Mammary epithelial cell (primary cell): ENCODE measurements at regions of chr12 and their contacts with region 1.

Region 1: GRCh38 chr12:89384050-89384758 is 31.9 kb upstream of the DUSP6 start:
- DNase-seq: peak; percentile 84
- H3K4me3 ChIP-seq: peak overlapping the region in 1 of 3 experiments; percentile 23
- H3K27ac ChIP-seq: peak overlapping the region; percentile 88
- H3K4me1 ChIP-seq: peaks cover 34% of the 10 kb centered on the region
- H3K27me3 ChIP-seq: no peaks in the 10 kb centered on the region
- CTCF ChIP-seq: no peak

Region 2: DNA sequence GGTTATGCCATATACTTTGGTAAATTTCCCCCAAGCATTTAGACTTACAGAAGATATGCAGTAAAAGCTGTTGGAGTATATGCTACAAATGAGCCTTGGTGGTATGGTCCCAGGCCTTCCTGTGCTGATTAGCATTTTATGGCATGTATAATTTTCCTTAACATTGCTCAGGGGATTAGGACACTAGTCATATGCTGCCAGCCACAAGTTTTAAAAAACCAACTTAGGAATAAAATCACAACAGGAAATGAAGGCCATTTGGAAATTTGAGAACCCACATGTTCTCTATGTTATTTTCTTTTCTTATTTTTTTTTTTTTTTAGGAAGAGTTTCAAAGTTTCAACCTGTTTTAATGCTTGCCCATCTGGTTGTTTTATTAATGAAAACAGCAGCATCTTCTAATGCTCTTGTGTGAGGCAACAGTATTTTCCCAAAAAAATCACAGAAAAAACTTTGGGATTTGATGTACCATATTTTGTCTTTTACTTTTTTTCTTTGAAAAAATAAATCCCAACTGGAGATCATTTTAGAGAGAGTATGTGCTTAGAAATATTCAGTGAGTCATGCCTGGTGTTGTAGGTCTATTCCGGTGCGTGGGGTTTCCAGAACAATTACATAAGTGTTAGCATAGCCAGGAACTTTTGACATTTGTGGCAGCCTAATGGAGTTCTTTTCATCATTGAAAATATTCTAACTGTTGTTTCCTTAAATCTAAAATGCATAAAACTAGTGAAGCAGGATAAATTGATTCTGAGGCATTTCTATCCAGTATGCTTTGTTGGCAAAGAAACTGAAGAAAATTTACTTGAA is 10.2 kb before region 1 on chr12:
- CTCF ChIA-PET with region 1: interaction called, 5 read pairs
- dilution Hi-C with region 1: no loop called
- in situ Hi-C with region 1: no loop called
- intact Hi-C with region 1: loop called (anchors 1 kb)
- DNase-seq: peak; percentile 81
- H3K4me3 ChIP-seq: no peak overlapping the region
- H3K27ac ChIP-seq: peak overlapping the region; percentile 95
- H3K4me1 ChIP-seq: peaks cover 80% of the 10 kb centered on the region
- H3K27me3 ChIP-seq: no peaks in the 10 kb centered on the region
- CTCF ChIP-seq: no peak

Region 3: DNA sequence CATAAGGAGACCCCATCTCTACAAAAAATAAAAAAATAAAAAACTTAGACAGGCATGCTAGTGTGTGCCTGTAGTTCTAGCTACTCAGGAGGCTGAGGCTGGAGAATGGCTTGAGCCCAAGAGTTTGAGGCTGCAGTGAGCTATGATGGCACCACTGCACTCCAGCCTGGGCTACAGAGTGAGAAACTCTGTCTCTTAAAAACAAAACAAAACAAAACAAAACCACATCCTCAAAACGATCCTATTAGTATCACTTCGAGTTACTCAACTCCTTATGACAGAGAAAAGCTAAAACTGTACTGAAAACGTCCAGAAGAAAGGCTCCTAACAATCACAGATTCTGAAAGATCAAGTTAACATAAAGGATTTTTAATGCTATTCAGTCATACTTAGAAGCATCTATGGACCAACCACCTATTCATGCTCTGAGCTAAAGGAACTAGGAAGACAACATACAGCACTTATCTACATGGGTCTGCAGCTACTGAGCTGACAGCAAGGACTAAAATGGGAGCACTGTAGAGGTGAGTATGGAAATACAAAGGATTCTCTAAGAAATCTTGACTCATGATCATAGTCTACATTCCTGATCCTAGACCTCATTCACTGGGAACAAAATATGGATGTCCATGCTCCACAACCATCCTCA is 43.4 kb after region 1 on chr12:
- CTCF ChIA-PET with region 1: no interaction called
- dilution Hi-C with region 1: loop called (anchors 5 kb)
- in situ Hi-C with region 1: no loop called
- intact Hi-C with region 1: no loop called
- DNase-seq: no peak
- H3K4me3 ChIP-seq: no peak overlapping the region
- H3K27ac ChIP-seq: no peak overlapping the region
- H3K4me1 ChIP-seq: peaks cover 3% of the 10 kb centered on the region
- H3K27me3 ChIP-seq: no peaks in the 10 kb centered on the region
- CTCF ChIP-seq: no peak